ENCODE measurements at regions of chr3 and their contacts with region 1.

Region 1: DNA sequence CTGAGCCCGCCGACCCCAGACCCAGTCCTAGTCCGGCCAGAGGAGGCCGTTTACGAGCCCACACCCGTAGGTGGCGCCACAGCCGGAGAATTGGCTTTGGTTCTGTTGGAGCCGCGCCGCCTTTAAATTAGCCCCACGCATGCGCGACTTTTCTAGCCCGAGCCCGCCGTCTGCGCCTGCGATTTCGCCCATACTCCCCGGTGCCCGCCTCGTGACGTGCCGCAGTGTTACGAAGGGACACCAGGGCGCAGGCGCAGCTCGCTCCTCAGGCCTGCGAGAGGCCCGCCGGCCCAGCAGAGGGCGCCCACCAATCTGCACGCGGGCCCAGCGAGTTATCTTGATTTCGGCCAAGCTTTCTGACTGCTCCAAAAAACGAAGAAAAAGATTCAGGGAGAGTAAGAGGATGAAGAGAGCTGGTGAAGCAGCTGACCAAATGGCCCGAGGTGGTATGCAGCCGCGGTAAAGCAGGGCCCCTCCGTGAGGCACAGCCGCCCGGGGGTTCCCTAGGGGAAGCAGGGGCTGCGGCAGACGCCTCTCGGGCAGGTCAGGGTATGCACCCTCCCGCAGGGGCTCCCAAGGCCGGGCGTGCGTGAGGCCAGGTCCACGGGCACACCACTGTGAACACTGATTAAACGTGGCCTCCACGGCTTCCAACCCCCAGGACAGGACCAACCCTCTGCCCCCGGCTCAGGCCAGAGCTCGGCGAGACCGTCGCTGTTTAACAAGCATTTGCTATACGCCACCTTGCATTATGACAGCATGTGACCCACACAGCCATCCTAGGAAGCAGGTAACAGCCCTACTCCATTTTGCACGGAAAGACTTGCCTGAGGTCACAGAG is 32.8 kb downstream of the RPN1 start:
- DNase-seq: peak; percentile 84 to 97
- H3K4me3 ChIP-seq: peak overlapping the region; percentile 71 to 94 (median 86)
- H3K27ac ChIP-seq: peak overlapping the region; percentile 77
- H3K4me1 ChIP-seq: peaks cover 0 to 7% (median 5%) of the 10 kb centered on the region in 4 experiments; a peak in 6 of 7 replicates
- H3K27me3 ChIP-seq: no peaks in the 10 kb centered on the region
- CTCF ChIP-seq: peak in 2 of 3 experiments; percentile 52 to 90; a peak in 3 of 4 replicates
- EP300 ChIP-seq: no peak; a peak in 1 of 3 replicates
- POLR2A ChIP-seq: peak in 1 of 2 experiments; percentile 72; a peak in 2 of 3 replicates
- RAD21 ChIP-seq: peak; percentile 55 to 65

Region 2: DNA sequence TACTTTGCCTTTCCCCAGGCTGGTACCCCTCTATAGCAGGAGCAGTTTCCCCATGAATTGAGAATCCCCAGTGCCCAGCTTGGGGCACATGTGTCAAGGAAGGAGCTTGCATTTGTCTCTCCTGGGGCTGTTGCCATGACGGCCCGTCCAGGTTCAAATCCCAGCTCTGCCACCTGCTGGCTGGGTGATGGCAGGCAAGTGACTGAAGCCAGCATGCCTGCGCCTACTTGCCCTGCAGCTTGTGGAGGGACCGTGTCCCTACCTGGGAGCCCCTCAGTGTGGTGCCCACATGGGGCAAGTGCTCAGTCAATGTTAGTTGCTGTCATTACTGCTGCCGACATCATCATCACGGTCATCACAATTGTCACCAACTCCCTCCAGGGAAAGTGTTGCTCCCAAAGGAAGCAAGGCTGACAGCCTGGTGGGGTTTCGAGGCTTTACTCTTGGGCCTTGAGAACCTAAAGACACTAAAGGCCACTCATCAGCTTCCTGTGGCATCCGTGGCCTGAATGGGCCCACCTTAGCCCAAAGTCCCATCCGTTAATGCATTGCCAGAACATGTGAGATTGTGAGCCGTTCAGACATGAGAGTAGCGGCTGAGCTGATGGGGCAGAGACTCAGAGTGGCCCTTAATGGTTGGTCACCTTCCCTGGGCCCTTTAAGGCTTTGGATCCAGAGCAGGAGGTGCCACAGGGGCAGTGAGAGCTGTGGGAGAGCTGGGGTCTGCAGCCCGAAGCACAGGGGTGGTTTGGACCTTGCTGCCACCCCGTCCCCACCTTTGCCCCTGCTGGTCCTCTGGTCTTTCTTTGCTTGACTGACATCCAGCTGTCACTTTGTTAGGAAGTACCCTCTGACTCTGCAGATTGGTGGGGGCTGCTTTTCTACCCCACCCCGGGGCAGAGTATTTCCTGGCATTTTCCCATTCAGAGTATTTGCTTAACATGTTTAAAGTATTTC is 295.4 kb before region 1 on chr3:
- CTCF ChIA-PET with region 1: no interaction called
- POLR2A ChIA-PET with region 1: no interaction called
- DNase-seq: peak; percentile 17 to 85
- H3K4me3 ChIP-seq: no peak overlapping the region
- H3K27ac ChIP-seq: no peak overlapping the region
- H3K4me1 ChIP-seq: peaks cover 0 to 4% (median 0%) of the 10 kb centered on the region in 4 experiments; a peak in 2 of 7 replicates
- H3K27me3 ChIP-seq: no peaks in the 10 kb centered on the region
- CTCF ChIP-seq: peak in 2 of 3 experiments; percentile 89 to 90; a peak in 3 of 4 replicates
- EP300 ChIP-seq: no peak
- POLR2A ChIP-seq: no peak
- RAD21 ChIP-seq: peak; percentile 76 to 86

Region 3: DNA sequence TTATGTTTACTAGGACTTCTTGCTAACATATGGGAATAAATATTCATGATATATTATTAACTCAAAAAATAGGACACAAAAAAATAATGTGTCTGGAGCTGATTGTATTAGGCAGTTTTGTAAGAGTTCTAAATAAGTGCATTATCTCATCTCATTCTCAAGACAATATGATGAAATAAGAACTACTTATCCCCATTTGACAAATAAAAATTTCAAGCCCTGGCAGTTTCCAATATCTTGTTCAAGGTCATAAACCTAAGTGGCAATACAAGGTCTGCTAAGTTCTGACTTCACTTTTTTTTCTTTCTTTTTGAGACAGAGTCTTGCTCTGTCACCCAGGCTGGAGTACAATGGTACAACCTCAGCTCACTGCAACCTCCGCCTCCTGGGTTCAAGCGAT is 14.5 kb after region 1 on chr3:
- CTCF ChIA-PET with region 1: interaction called, 12 read pairs
- POLR2A ChIA-PET with region 1: no interaction called
- DNase-seq: no peak
- H3K4me3 ChIP-seq: no peak overlapping the region
- H3K27ac ChIP-seq: no peak overlapping the region
- H3K4me1 ChIP-seq: no peaks in the 10 kb centered on the region
- H3K27me3 ChIP-seq: no peaks in the 10 kb centered on the region
- CTCF ChIP-seq: no peak
- EP300 ChIP-seq: no peak
- POLR2A ChIP-seq: no peak
- RAD21 ChIP-seq: no peak

Region 4: GRCh38 chr3:128650096-128651050 is 32.6 kb after region 1 on chr3 and contains the start of gene RPN1:
- CTCF ChIA-PET with region 1: interaction called, 10 read pairs
- POLR2A ChIA-PET with region 1: interaction called, 10 read pairs
- DNase-seq: peak; percentile 57 to 95
- H3K4me3 ChIP-seq: peak within 1 kb of the TSS; percentile 90 to 100 (median 98)
- H3K27ac ChIP-seq: peak within 1 kb of the TSS; percentile 95
- H3K4me1 ChIP-seq: no peaks in the 10 kb centered on the region; a peak in 2 of 7 replicates
- H3K27me3 ChIP-seq: no peaks in the 10 kb centered on the region
- CTCF ChIP-seq: no peak
- EP300 ChIP-seq: no peak; a peak in 1 of 3 replicates
- POLR2A ChIP-seq: peak; percentile 75 to 94
- RAD21 ChIP-seq: no peak
- total RNA-seq, gene RPN1: 204 and 211 TPM in 2 replicates

Measured in H1 (cell line).